SK-N-SH (cell line): ENCODE measurements at regions of chr1 and their contacts with region 1.

Region 1: DNA sequence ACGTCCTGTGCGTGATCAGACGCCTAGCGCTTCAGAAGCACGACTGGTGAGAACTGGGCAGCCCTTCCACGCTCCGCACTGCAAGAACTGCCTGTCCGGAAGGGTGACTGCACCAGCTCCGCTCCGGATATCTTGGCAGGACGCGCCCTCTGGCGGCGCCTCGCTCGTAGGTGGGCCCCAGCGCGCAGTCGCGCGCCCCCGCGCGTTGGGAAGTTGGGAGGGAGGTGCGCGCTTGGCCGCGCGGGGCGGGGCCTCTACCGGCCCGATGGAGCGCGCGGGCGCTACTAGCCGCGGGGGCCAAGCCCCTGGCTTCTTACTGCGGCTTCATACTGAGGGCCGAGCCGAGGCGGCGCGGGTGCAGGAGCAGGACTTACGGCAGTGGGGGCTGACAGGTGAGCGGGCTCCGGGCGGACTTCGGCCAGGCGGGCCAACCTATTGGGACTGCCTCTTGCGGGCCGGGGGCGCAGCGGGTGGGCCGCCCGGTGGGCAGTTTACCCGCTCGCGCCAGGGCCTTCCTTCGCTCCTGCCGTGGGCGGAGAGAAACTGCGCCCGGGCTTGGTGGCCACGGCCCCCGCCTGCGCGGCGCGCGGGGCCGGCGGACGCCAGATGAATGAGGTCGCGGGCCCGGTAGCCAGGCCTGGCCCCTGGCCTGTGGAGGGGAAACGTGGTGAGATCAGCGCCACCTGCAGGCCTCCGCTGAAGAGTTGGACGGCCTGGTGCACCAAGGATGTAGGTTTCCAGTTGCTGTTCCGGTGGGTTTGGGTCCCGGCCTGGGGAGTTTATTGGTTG is at the start of gene CHD1L:
- DNase-seq: peak; percentile 94
- H3K4me3 ChIP-seq: peak within 1 kb of the TSS; percentile 75 to 99
- H3K27ac ChIP-seq: peak within 1 kb of the TSS; percentile 85 to 92
- H3K4me1 ChIP-seq: peaks cover 0 to 19% of the 10 kb centered on the region in 2 experiments; a peak in 2 of 4 replicates
- H3K27me3 ChIP-seq: no peaks in the 10 kb centered on the region
- CTCF ChIP-seq: peak; percentile 74
- EP300 ChIP-seq: no peak
- RAD21 ChIP-seq: peak; percentile 89
- polyA plus RNA-seq, gene CHD1L: 24.7 and 37.2 TPM in 2 replicates

Region 2: GRCh38 chr1:147039916-147040315 is 202.7 kb before region 1 on chr1:
- CTCF ChIA-PET with region 1: no interaction called
- POLR2A ChIA-PET with region 1: no interaction called
- DNase-seq: no peak
- H3K4me3 ChIP-seq: no peak overlapping the region
- H3K27ac ChIP-seq: no peak overlapping the region
- H3K4me1 ChIP-seq: no peaks in the 10 kb centered on the region
- H3K27me3 ChIP-seq: no peaks in the 10 kb centered on the region
- CTCF ChIP-seq: no peak
- EP300 ChIP-seq: no peak
- RAD21 ChIP-seq: no peak

Region 3: DNA sequence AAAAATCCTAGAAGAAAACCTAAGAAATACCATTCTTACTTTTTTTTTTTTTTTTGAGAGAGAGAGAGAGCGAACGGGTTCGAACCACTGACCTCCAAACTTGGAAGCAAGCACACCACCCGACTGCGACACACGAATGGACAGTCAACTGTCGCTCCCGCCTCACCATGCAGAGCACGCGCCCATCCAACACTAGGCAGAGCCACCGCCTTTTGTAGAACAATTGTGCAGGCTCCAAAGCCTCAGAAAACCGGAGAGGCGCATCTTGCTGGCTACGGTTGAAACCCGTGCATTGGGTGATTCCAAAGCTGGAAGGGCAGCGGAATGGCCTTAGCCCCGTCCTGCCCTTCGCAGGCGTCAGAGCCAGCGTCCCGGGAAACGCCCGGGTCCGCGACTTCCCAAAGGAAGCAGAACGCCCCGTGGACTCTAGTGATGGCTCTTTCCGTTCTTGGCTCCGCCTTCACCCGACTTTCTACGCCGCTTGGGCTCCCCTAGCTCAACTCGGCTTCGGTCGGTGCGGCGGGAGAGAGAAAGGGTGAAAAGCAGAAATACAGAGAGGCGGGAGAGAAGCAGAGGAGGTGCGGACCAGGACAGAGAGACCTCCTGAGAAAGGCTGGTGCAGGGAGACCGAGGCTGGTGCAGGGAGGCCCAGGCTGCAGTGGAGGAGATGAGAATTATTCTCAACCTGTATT is 170.1 kb before region 1 on chr1:
- CTCF ChIA-PET with region 1: no interaction called
- POLR2A ChIA-PET with region 1: no interaction called
- DNase-seq: peak; percentile 37
- H3K4me3 ChIP-seq: peak overlapping the region; percentile 34 to 51; a peak in 3 of 4 replicates
- H3K27ac ChIP-seq: no peak overlapping the region
- H3K4me1 ChIP-seq: peaks cover 0 to 5% of the 10 kb centered on the region in 2 experiments; a peak in 1 of 4 replicates
- H3K27me3 ChIP-seq: peaks cover 28% of the 10 kb centered on the region
- CTCF ChIP-seq: no peak
- EP300 ChIP-seq: no peak
- RAD21 ChIP-seq: no peak

Region 4: GRCh38 chr1:147172168-147172992 is 70.3 kb before region 1 on chr1 and contains the start of gene PRKAB2:
- CTCF ChIA-PET with region 1: interaction called, 51 read pairs
- POLR2A ChIA-PET with region 1: interaction called, 5 read pairs
- DNase-seq: peak; percentile 95
- H3K4me3 ChIP-seq: peak within 1 kb of the TSS; percentile 87 to 99
- H3K27ac ChIP-seq: peak within 1 kb of the TSS; percentile 92 to 93
- H3K4me1 ChIP-seq: peaks cover 27 to 28% of the 10 kb centered on the region in 2 experiments; a peak in 3 of 4 replicates
- H3K27me3 ChIP-seq: no peaks in the 10 kb centered on the region
- CTCF ChIP-seq: peak; percentile 85
- EP300 ChIP-seq: no peak; a peak in 1 of 4 replicates
- RAD21 ChIP-seq: peak; percentile 59
- polyA plus RNA-seq, gene PRKAB2: 6.2 and 9.4 TPM in 2 replicates

Region 5: DNA sequence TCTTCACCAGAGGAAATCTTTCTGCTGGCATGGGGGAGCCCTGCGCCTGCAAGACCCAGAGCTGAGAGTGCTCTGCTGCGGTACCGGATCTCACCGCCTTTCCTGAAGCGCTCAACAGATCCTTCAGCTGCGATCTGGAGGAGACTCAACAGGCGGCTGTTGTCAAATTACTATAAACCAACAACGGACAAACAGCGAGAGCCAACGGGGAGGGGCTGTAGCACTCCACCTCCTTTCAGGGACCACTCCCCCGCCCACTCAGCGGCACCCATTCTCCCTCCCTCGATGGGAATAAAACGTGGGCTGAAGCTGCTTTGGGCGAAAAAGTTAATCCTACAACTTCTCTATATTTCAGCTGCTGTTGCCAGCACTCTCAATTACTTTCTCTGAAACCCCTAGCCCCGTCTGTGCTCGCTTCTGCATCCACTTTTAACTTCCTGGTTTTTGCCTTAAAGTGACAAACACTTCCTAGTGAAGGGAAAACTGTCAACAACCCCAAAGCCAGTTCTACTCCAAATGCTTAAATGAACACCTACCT is 17.4 kb before region 1 on chr1 and contains the start of gene FMO5:
- CTCF ChIA-PET with region 1: interaction called, 20 read pairs
- POLR2A ChIA-PET with region 1: no interaction called
- DNase-seq: peak; percentile 57
- H3K4me3 ChIP-seq: peak within 1 kb of the TSS; percentile 72 to 77
- H3K27ac ChIP-seq: peak within 1 kb of the TSS; percentile 6 to 30; a peak in 2 of 4 replicates
- H3K4me1 ChIP-seq: peaks cover 0 to 6% of the 10 kb centered on the region in 2 experiments; a peak in 1 of 4 replicates
- H3K27me3 ChIP-seq: no peaks in the 10 kb centered on the region
- CTCF ChIP-seq: no peak
- EP300 ChIP-seq: no peak
- RAD21 ChIP-seq: no peak
- polyA plus RNA-seq, gene FMO5: 0.30 and 0.50 TPM in 2 replicates

Region 6: DNA sequence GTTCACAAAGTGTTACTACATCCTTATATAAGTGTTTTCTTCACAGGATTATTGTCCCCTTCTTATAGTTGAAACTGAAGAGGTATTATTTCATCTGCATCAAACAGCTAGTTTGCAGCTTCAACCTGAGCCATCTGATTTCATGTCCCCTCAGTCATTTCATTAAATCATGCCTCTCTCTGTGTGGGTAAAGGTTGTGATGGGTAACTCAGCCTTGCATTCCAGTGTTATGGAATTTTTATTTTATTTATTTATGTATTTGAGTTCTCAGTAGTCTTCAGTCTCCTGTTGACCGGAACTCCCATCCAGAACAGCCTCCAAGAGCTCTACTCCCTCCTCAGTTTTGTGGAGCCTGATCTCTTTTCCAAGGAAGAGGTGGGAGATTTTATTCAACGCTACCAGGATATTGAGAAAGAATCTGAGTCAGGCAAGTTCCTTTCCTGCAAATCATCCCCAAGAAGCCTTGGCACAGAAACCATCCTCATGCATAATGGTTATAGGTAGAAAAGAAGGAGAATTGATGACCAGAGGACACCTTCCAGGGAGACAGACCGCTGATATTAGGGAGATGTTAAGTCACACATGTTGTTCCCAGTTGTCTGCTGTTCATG is 21.6 kb after region 1 on chr1:
- CTCF ChIA-PET with region 1: interaction called, 28 read pairs
- POLR2A ChIA-PET with region 1: no interaction called
- DNase-seq: no peak
- H3K4me3 ChIP-seq: no peak overlapping the region
- H3K27ac ChIP-seq: no peak overlapping the region
- H3K4me1 ChIP-seq: no peaks in the 10 kb centered on the region
- H3K27me3 ChIP-seq: no peaks in the 10 kb centered on the region
- CTCF ChIP-seq: no peak
- EP300 ChIP-seq: no peak
- RAD21 ChIP-seq: no peak